Common myeloid progenitor, CD34-positive (primary cell): ENCODE measurements at regions of chr10 and their contacts with region 1.

Region 1: DNA sequence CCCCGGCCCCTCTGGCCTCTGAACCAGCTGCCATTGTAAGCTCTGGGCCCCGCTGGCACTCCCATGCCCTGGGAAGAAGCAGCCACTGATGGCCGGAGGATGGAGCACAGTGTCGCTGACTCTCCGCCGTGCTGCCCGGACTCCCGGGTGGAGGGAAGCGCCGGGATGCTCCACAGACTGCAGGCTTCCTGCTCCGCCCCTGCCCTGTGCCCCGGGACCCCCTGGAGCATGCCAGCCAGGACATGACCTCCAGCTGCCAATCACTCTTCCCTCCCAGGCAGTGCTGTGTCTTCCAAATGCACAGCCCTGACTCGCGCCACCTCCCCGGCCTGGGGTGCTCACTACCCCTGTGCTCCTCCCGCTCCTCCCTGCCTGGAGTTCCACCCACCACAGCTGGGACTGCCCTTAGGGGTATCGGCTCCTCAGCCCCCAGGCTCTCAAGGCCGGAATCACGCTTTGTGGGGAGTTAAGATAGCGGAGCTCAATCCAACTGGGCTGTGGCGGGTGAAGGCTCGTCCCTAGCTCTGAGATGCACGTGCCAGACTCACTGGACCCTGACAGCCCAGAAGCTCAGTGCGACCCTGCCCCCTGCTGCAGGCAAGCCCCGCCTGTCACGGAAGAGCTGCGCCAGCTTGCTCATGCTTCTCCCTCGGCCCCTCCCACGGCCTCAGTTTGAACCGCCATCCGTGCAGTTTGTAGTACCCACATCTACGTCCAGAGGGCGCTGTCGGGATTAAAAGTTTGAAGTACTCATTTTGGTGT is 142.3 kb upstream of the TCERG1L start:
- DNase-seq: peak; percentile 65 to 83 (median 76)
- H3K4me3 ChIP-seq: peak overlapping the region in 2 of 7 experiments; percentile 35 to 55
- H3K27ac ChIP-seq: no peak overlapping the region
- H3K4me1 ChIP-seq: peaks cover 0 to 6% (median 2%) of the 10 kb centered on the region in 4 experiments
- H3K27me3 ChIP-seq: peaks cover 3 to 78% (median 19%) of the 10 kb centered on the region in 5 experiments

Region 2: GRCh38 chr10:131167036-131167860 is 286.5 kb before region 1 on chr10:
- CTCF ChIA-PET with region 1: no interaction called
- POLR2A ChIA-PET with region 1: no interaction called
- DNase-seq: no peak
- H3K4me3 ChIP-seq: no peak overlapping the region
- H3K27ac ChIP-seq: no peak overlapping the region
- H3K4me1 ChIP-seq: no peaks in the 10 kb centered on the region
- H3K27me3 ChIP-seq: peaks cover 0 to 12% (median under 1%) of the 10 kb centered on the region in 5 experiments

Region 3: DNA sequence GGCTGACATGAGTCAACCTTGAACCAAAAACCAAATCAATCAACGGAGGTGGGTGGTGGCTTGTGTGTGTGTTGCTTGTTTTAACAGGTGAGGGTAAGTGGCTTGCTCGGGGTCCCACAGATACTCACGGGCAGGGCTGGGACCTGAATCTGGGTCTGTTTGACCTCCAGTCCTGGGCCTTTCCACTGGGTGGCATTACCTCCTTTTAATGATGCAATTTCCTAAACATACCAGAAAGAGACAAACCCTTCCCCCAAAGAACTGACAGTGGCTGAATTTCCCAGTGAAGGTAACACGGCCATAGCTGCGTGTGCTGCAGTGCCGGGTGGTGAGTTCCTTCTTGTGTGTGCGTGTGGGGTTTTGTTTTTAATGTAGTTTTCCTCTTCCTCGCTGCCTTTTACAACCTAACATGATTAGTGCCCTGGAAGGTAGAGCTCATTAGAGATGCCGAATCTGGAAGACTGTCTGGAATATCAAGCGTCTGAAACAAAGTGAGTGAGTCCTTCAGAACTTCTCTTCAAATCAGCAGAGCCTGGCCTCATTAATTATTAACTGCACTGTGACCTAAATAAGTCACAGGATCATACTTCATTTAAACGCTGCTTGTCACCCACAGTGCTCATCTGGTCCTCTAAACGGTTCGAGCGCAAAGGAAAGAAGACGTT is 23.8 kb after region 1 on chr10:
- CTCF ChIA-PET with region 1: no interaction called
- POLR2A ChIA-PET with region 1: no interaction called
- DNase-seq: peak in 2 of 3 donors; percentile 3 to 6
- H3K4me3 ChIP-seq: no peak overlapping the region
- H3K27ac ChIP-seq: no peak overlapping the region
- H3K4me1 ChIP-seq: no peaks in the 10 kb centered on the region
- H3K27me3 ChIP-seq: peaks cover 0 to 14% (median 3%) of the 10 kb centered on the region in 5 experiments

Region 4: DNA sequence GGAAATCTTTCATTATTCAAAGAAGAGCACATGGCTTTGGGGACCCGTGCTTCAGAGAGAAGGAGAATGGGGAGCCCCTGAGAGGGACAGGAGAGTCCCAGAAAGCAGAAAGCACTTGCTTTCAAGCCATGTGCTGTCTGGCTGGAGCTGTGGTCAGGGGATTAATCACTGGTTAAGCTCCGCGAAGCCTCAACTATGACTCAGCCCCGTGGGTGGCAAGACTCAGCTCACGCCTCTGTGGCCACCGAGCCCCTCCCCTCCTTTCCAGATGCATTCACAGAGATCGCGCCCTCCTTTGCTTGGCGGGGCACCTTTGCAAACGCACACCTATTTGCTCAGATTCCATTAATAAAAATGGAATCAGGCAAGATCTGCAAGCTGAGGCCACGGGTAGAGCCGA is 60.7 kb after region 1 on chr10:
- CTCF ChIA-PET with region 1: no interaction called
- POLR2A ChIA-PET with region 1: no interaction called
- DNase-seq: peak in 2 of 3 donors; percentile 1 to 3
- H3K4me3 ChIP-seq: no peak overlapping the region
- H3K27ac ChIP-seq: no peak overlapping the region
- H3K4me1 ChIP-seq: no peaks in the 10 kb centered on the region
- H3K27me3 ChIP-seq: peaks cover 0 to 23% (median 0%) of the 10 kb centered on the region in 5 experiments

Region 5: GRCh38 chr10:131874991-131875451 is 421.2 kb after region 1 on chr10:
- CTCF ChIA-PET with region 1: interaction called, 11 read pairs
- POLR2A ChIA-PET with region 1: no interaction called
- DNase-seq: peak; percentile 83 to 92 (median 89)
- H3K4me3 ChIP-seq: peak overlapping the region in 1 of 7 experiments; percentile 45
- H3K27ac ChIP-seq: no peak overlapping the region
- H3K4me1 ChIP-seq: peaks cover 0 to 5% (median 0%) of the 10 kb centered on the region in 4 experiments
- H3K27me3 ChIP-seq: peaks cover 0 to 8% (median 2%) of the 10 kb centered on the region in 5 experiments